ENCODE measurements at regions of chr1 and their contacts with region 1.

Region 1: DNA sequence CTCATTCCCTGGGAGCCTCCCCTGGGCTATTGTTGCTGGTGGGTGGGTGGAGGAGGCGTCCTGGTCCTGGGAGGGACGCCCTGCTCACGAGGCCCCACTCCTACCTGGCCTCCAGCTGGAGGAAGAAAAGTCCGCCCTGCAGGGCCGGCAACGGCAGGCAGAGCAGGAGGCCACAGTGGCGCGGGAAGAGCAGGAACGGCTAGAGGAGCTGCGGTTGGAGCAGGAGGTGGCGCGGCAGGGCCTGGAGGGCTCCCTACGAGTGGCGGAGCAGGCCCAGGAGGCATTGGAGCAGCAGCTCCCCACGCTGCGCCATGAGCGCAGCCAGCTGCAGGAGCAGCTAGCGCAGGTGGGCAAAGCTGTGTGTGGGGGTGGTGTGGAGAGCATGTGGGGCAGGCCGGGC is 24.9 kb downstream of the CROCC start:
- DNase-seq: no peak
- ATAC-seq: no peak
- H3K4me3 ChIP-seq: no peak overlapping the region
- H3K4me3 Mint-ChIP-seq: no peak overlapping the region
- H3K27ac ChIP-seq: no peak overlapping the region
- H3K27ac Mint-ChIP-seq: no peak overlapping the region
- H3K4me1 ChIP-seq: no peaks in the 10 kb centered on the region
- H3K4me1 Mint-ChIP-seq: peaks cover 0 to 5% (median 0%) of the 10 kb centered on the region in 7 donors
- H3K27me3 ChIP-seq: no peaks in the 10 kb centered on the region
- H3K27me3 Mint-ChIP-seq: no peaks in the 10 kb centered on the region

Region 2: DNA sequence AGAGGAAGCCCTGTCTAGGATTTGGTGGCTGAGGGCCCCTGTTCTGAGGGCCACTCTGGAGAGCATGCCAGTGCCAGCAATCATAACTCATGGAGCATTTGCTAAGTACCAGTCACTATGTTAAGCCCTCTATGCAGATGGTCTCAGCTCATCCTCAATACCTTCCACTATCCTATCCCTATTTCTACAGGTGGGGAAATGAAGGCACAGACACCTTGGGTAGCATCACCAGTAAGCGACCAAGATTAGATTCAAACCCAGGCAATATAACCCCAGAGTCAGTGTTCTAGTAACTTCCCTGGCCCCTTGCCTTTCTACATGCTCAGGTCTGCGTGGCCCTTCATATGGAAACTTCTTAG is 325.4 kb before region 1 on chr1:
- CTCF ChIA-PET with region 1: interaction called, 5 read pairs
- POLR2A ChIA-PET with region 1: no interaction called
- intact Hi-C with region 1: loop called in 1 of 2 experiments (anchors 1 kb)
- DNase-seq: no peak
- ATAC-seq: no peak
- H3K4me3 ChIP-seq: no peak overlapping the region
- H3K4me3 Mint-ChIP-seq: no peak overlapping the region
- H3K27ac ChIP-seq: no peak overlapping the region
- H3K27ac Mint-ChIP-seq: no peak overlapping the region
- H3K4me1 ChIP-seq: no peaks in the 10 kb centered on the region
- H3K4me1 Mint-ChIP-seq: peaks cover 0 to 2% (median 0%) of the 10 kb centered on the region in 7 donors
- H3K27me3 ChIP-seq: no peaks in the 10 kb centered on the region
- H3K27me3 Mint-ChIP-seq: no peaks in the 10 kb centered on the region

Region 3: DNA sequence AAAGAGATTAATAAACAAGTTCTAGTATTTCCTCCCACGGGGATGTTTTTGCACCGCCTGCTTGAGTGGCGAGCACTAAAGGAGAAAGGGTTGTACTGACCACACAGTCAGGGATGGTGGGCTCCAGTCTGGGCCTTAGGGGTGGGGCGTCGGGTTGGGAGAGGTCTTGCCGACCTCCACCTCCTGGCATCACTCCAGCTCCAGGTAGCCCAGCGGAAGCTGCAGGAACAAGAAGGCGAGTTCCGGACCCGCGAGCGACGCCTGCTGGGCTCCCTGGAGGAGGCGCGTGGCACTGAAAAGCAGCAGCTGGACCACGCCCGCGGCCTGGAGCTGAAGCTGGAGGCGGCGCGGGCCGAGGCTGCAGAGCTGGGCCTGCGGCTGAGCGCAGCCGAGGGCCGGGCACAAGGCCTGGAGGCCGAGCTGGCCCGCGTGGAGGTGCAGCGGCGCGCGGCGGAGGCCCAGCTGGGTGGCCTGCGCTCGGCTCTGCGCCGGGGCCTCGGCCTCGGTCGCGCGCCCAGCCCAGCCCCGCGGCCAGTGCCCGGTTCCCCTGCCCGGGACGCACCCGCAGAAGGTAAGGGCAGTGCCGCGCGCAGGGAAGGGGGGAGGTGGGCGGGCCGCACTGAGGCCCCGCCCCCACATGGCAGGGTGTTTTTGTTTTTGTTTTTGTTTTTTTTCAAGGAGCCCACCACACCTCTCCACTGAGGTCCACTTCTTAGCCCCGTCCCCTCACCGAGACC is 14.1 kb after region 1 on chr1:
- CTCF ChIA-PET with region 1: interaction called, 14 read pairs
- POLR2A ChIA-PET with region 1: interaction called, 6 read pairs
- intact Hi-C with region 1: loop called in 1 of 2 experiments (anchors 1 kb)
- DNase-seq: peak; percentile 50 to 83 (median 66)
- ATAC-seq: peak; percentile 92
- H3K4me3 ChIP-seq: peak overlapping the region; percentile 40
- H3K4me3 Mint-ChIP-seq: peak overlapping the region; percentile 71 to 87 (median 82)
- H3K27ac ChIP-seq: peak overlapping the region; percentile 48
- H3K27ac Mint-ChIP-seq: peak overlapping the region; percentile 14 to 83 (median 68)
- H3K4me1 ChIP-seq: peaks cover 0 to 4% of the 10 kb centered on the region in 2 donors
- H3K4me1 Mint-ChIP-seq: peaks cover 4 to 14% (median 10%) of the 10 kb centered on the region in 7 donors
- H3K27me3 ChIP-seq: no peaks in the 10 kb centered on the region
- H3K27me3 Mint-ChIP-seq: no peaks in the 10 kb centered on the region

Region 4: GRCh38 chr1:17011439-17012307 is 65.0 kb after region 1 on chr1 and contains the start of gene ATP13A2:
- CTCF ChIA-PET with region 1: no interaction called
- POLR2A ChIA-PET with region 1: no interaction called
- intact Hi-C with region 1: loop called in 1 of 2 experiments (anchors 2 kb)
- DNase-seq: peak; percentile 76 to 87 (median 82)
- ATAC-seq: peak; percentile 99
- H3K4me3 ChIP-seq: peak within 1 kb of the TSS; percentile 72
- H3K4me3 Mint-ChIP-seq: peak within 1 kb of the TSS; percentile 81 to 91 (median 86)
- H3K27ac ChIP-seq: peak within 1 kb of the TSS; percentile 72
- H3K27ac Mint-ChIP-seq: peak within 1 kb of the TSS; percentile 23 to 83 (median 75)
- H3K4me1 ChIP-seq: peaks cover 15 to 16% of the 10 kb centered on the region in 2 donors
- H3K4me1 Mint-ChIP-seq: peaks cover 9 to 27% (median 17%) of the 10 kb centered on the region in 7 donors
- H3K27me3 ChIP-seq: no peaks in the 10 kb centered on the region
- H3K27me3 Mint-ChIP-seq: peaks cover 0 to 2% (median 0%) of the 10 kb centered on the region in 5 donors
- total RNA-seq, gene ATP13A2: 32.9 to 57.4 (median 42.1) TPM

Region 5: GRCh38 chr1:17045634-17046333 is 99.1 kb after region 1 on chr1:
- CTCF ChIA-PET with region 1: interaction called, 7 read pairs
- POLR2A ChIA-PET with region 1: no interaction called
- intact Hi-C with region 1: loop called (anchors 1 kb)
- DNase-seq: peak in 6 of 9 donors; percentile 21 to 47 (median 28)
- ATAC-seq: peak; percentile 50
- H3K4me3 ChIP-seq: no peak overlapping the region
- H3K4me3 Mint-ChIP-seq: peak overlapping the region in 2 of 10 donors; percentile 4 to 49
- H3K27ac ChIP-seq: no peak overlapping the region
- H3K27ac Mint-ChIP-seq: peak overlapping the region in 6 of 9 donors; percentile 45 to 79 (median 66)
- H3K4me1 ChIP-seq: peaks cover 0 to 3% of the 10 kb centered on the region in 2 donors
- H3K4me1 Mint-ChIP-seq: peaks cover 5 to 28% (median 20%) of the 10 kb centered on the region in 7 donors
- H3K27me3 ChIP-seq: no peaks in the 10 kb centered on the region
- H3K27me3 Mint-ChIP-seq: no peaks in the 10 kb centered on the region

Measured in naive thymus-derived CD4-positive, alpha-beta T cell (primary cell).